Lower leg skin (tissue), 4 donors: ENCODE measurements at regions of chr18 and their contacts with region 1.

Region 1: DNA sequence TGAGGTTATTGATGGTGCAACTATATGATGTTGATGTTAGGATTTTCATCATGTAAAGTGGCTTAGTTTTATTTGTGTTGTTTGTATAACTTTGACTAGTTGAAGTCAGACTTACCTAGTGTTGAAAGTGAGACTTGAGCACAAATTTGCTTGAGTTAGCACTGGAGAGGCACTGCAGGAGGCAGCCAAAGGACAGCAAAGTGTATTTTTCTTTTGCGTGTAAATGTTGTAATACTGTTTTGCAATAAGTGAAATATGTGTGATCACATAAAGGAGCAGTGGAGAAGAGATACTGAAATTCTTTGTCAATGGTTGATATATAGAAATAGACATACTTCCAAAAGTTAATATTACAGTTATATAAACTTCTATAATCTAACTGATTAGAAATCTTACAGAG is 332.0 kb upstream of the RAB12 start:
- DNase-seq: no peak
- H3K4me3 ChIP-seq: no peak overlapping the region
- CTCF ChIP-seq: no peak
- POLR2A ChIP-seq: no peak

Region 2: GRCh38 chr18:8301427-8302172 is 24.3 kb after region 1 on chr18:
- intact Hi-C with region 1: loop called (anchors 1 kb)
- DNase-seq: no peak
- H3K4me3 ChIP-seq: no peak overlapping the region
- CTCF ChIP-seq: no peak
- POLR2A ChIP-seq: no peak